Right cardiac atrium (tissue), 5 donors: ENCODE measurements at regions of chr12 and their contacts with region 1.

Region 1: GRCh38 chr12:115916910-115917668 is 360.4 kb downstream of the MED13L start:
- DNase-seq: peak; percentile 41 to 83 (median 76)
- ATAC-seq: peak; percentile 69 to 76
- H3K4me3 ChIP-seq: peak overlapping the region; percentile 3
- H3K27ac ChIP-seq: no peak overlapping the region
- H3K4me1 ChIP-seq: no peaks in the 10 kb centered on the region
- H3K27me3 ChIP-seq: no peaks in the 10 kb centered on the region

Region 2: GRCh38 chr12:114662512-114663177 is 1254.4 kb before region 1 on chr12:
- intact Hi-C with region 1: loop called (anchors 2 to 5 kb)
- DNase-seq: peak; percentile 73 to 91 (median 83)
- ATAC-seq: peak; percentile 38 to 43
- H3K4me3 ChIP-seq: no peak overlapping the region
- H3K27ac ChIP-seq: no peak overlapping the region
- H3K4me1 ChIP-seq: no peaks in the 10 kb centered on the region
- H3K27me3 ChIP-seq: no peaks in the 10 kb centered on the region

Region 3: DNA sequence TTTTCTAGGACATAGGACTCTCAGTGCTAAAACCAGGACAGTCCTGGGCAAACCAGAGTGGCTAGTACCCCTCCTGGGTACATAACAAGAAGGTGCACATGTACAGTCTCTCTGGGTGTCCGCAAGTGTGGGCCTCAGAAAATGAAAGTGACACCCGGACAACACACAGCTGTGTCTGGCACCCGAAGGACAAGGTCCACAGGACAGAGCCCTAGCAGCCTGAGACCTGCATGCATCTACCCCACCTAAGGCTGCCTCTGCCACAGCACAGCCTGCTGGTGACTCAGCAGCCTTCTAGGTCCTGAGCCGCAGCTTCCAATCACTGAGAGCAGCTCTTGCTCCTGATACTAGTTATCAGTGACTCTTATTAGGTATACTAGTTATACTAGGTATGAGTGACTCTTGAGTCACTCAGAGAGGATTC is 449.0 kb before region 1 on chr12:
- intact Hi-C with region 1: loop called in 1 of 4 experiments (anchors 10 kb)
- DNase-seq: no peak
- ATAC-seq: peak in 1 of 2 donors; percentile 36
- H3K4me3 ChIP-seq: no peak overlapping the region
- H3K27ac ChIP-seq: no peak overlapping the region
- H3K4me1 ChIP-seq: no peaks in the 10 kb centered on the region
- H3K27me3 ChIP-seq: no peaks in the 10 kb centered on the region

Region 4: DNA sequence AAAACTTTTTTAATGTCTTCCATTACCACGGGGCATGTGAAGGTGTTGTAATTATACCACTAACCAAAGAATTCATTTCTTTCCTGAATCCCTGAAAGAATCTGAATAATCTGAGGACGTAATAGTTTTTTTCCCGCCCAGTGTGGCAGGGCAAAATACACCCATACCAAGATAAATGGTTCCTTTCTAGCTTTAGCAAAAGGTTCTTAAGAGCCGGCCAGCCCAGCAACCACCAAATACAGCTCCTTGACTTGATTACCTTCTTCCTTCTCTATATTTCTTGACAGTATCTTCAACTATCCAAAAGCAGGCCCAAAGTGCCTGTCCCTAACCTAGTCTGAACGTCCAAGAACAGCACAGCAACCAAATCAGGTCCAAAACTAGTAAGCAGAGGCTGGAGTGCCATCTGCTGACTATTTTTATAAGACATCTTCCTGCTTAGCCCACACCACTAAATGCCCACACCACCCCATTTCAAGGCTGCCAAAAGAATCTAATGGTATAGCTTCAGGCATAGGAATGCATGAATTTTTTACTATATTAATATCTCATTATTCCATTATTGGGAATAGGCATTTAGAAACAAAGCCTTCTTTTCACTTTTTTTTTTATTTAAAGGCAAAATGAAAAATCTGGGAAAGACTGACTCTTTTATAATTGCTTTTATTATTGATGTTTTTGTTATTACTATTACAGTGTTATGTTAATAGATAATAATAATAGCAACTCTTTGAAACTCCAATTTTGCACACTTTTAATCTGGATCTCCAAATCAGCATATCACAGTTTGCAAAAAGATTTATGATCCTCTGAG is 164.0 kb before region 1 on chr12:
- intact Hi-C with region 1: loop called in 2 of 4 experiments (anchors 10 kb)
- DNase-seq: peak in 2 of 3 donors; percentile 10 to 42
- ATAC-seq: peak; percentile 90 to 94
- H3K4me3 ChIP-seq: no peak overlapping the region
- H3K27ac ChIP-seq: no peak overlapping the region
- H3K4me1 ChIP-seq: no peaks in the 10 kb centered on the region
- H3K27me3 ChIP-seq: peaks cover 5% of the 10 kb centered on the region

Region 5: GRCh38 chr12:115771065-115771464 is 146.0 kb before region 1 on chr12:
- intact Hi-C with region 1: loop called in 1 of 4 experiments (anchors 10 kb)
- DNase-seq: no peak
- ATAC-seq: no peak
- H3K4me3 ChIP-seq: no peak overlapping the region
- H3K27ac ChIP-seq: no peak overlapping the region
- H3K4me1 ChIP-seq: no peaks in the 10 kb centered on the region
- H3K27me3 ChIP-seq: no peaks in the 10 kb centered on the region

Region 6: GRCh38 chr12:116015525-116015924 is 98.4 kb after region 1 on chr12:
- intact Hi-C with region 1: no loop called
- DNase-seq: no peak
- ATAC-seq: peak; percentile 79 to 87
- H3K4me3 ChIP-seq: no peak overlapping the region
- H3K27ac ChIP-seq: no peak overlapping the region
- H3K4me1 ChIP-seq: peaks cover 2% of the 10 kb centered on the region
- H3K27me3 ChIP-seq: no peaks in the 10 kb centered on the region

Region 7: GRCh38 chr12:116123451-116124258 is 206.6 kb after region 1 on chr12:
- intact Hi-C with region 1: no loop called
- DNase-seq: peak in 2 of 3 donors; percentile 34 to 55
- ATAC-seq: peak; percentile 83 to 86
- H3K4me3 ChIP-seq: peak overlapping the region; percentile 16
- H3K27ac ChIP-seq: peak overlapping the region; percentile 77
- H3K4me1 ChIP-seq: peaks cover 8% of the 10 kb centered on the region
- H3K27me3 ChIP-seq: no peaks in the 10 kb centered on the region